Activated T-helper 1 cell treated with anti-CD3 and anti-CD28 coated beads, Interleukin-12 subunit alpha, Interleukin-12 subunit beta, Interleukin-2, Interleukin-4 antibody, amounts not matched to agents 30 ng/mL and 10 ng/mL and 1 ng/mL, durations not matched to agents 14 hours and 24 hours and 36 hours (primary cell): ENCODE measurements at regions of chr1 and their contacts with region 1.

Region 1: DNA sequence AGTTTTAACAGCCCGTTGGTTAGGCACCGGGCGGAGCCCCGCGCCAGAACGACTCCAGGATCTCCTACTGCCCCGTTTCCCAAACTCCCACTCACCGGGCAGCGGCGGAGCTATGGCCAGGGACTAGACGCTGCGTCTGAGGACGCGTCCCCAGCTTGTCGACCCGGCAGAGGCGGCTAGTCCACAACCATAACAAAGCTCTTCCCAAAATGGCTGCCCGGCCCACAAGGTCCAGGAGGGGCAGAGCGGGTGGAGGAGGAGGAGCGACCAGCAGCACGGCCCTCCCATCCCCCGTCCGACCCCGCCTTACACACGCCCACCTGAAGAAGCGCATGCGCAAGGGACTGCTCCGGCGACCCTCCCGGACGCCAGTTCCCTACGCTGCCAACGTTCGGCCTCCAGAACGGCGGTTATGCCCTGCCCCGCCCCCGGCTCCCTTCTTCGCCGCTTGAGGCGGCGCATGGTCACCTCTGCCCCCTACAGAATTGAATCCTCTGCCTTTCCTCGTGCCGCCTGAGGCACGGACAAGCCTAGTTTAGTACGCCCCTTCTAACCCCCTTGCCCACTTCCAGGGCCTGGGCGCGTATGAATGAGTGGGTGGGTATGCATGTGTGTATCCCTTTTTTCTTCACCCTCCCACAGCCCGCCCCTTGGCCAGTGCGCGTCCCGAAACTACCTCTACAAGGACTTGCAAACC is at the start of gene GPBP1L1:
- DNase-seq: peak; percentile 96
- H3K4me3 Mint-ChIP-seq: peak within 1 kb of the TSS; percentile 99
- H3K27ac Mint-ChIP-seq: peak within 1 kb of the TSS; percentile 99
- H3K4me1 Mint-ChIP-seq: peaks cover 31% of the 10 kb centered on the region
- H3K27me3 Mint-ChIP-seq: no peaks in the 10 kb centered on the region
- total RNA-seq, gene GPBP1L1: 99.3 and 109 TPM in 2 replicates

Region 2: GRCh38 chr1:44721485-44722361 is 964.7 kb before region 1 on chr1:
- intact Hi-C with region 1: loop called (anchors 5 kb)
- DNase-seq: peak; percentile 75
- H3K4me3 Mint-ChIP-seq: peak overlapping the region; percentile 77
- H3K27ac Mint-ChIP-seq: peak overlapping the region; percentile 97
- H3K4me1 Mint-ChIP-seq: peaks cover 71% of the 10 kb centered on the region
- H3K27me3 Mint-ChIP-seq: no peaks in the 10 kb centered on the region

Region 3: GRCh38 chr1:44985747-44986359 is 700.6 kb before region 1 on chr1:
- intact Hi-C with region 1: loop called (anchors 10 kb)
- DNase-seq: no peak
- H3K4me3 Mint-ChIP-seq: peak overlapping the region; percentile 100
- H3K27ac Mint-ChIP-seq: peak overlapping the region; percentile 94
- H3K4me1 Mint-ChIP-seq: peaks cover 21% of the 10 kb centered on the region
- H3K27me3 Mint-ChIP-seq: peaks cover 2% of the 10 kb centered on the region

Region 4: DNA sequence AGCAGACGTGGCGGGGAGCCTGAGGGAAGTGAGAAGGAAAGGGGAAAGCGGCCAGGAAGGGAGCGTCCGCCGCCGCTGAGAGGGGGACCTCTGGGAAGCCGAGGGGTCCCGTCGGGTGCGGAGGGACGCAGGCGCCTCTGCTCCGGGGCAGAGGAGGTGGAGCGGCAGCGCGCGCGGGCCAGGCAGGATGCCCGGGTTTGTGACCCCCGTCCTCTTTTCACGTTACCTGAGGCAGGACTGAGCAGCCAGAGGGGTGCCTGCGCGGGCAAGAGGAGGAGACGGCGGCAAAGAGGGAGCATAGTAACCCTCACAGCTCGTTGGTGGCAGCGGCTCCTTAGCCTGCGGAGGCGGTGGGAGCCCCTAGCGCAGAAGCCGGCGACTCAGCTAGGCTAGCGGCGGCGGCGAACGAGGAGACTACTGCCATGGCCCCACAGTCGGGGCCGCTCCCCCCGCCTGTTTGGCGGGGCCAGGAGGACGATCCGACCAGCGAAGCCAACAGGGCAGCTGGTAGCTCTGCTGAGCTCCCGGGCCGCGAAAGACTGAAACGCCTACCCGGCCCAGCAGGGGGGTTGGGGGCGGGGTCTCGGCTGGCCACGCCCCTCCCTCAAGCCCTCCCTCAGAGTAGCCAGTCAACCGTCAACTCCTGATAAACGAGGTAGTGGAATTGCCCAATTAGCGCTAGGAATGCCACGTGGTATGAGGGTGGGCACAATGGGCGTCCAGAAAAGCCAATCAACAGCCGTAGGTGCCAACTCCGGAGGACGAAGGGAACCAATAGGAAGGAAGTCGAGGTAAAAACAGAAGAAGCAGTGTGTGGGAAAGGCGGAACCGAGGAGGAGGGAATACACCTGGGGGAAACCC is 195.6 kb before region 1 on chr1 and contains the start of gene TESK2:
- intact Hi-C with region 1: loop called (anchors 1 kb)
- DNase-seq: peak; percentile 97
- H3K4me3 Mint-ChIP-seq: no peak within 1 kb of the TSS
- H3K27ac Mint-ChIP-seq: no peak within 1 kb of the TSS
- H3K4me1 Mint-ChIP-seq: peaks cover 5% of the 10 kb centered on the region
- H3K27me3 Mint-ChIP-seq: no peaks in the 10 kb centered on the region
- total RNA-seq, gene TESK2: 1.4 and 1.6 TPM in 2 replicates

Region 5: GRCh38 chr1:45640293-45640692 is 46.2 kb before region 1 on chr1:
- intact Hi-C with region 1: no loop called
- DNase-seq: no peak
- H3K4me3 Mint-ChIP-seq: no peak overlapping the region
- H3K27ac Mint-ChIP-seq: no peak overlapping the region
- H3K4me1 Mint-ChIP-seq: no peaks in the 10 kb centered on the region
- H3K27me3 Mint-ChIP-seq: no peaks in the 10 kb centered on the region

Region 6: GRCh38 chr1:45654540-45655280 is 31.8 kb before region 1 on chr1:
- intact Hi-C with region 1: loop called (anchors 2 kb)
- DNase-seq: no peak
- H3K4me3 Mint-ChIP-seq: no peak overlapping the region
- H3K27ac Mint-ChIP-seq: peak overlapping the region; percentile 27
- H3K4me1 Mint-ChIP-seq: peaks cover 5% of the 10 kb centered on the region
- H3K27me3 Mint-ChIP-seq: no peaks in the 10 kb centered on the region

Region 7: GRCh38 chr1:46062651-46063319 is 376.3 kb after region 1 on chr1:
- intact Hi-C with region 1: loop called (anchors 5 kb)
- DNase-seq: peak; percentile 54
- H3K4me3 Mint-ChIP-seq: no peak overlapping the region
- H3K27ac Mint-ChIP-seq: peak overlapping the region; percentile 24
- H3K4me1 Mint-ChIP-seq: peaks cover 34% of the 10 kb centered on the region
- H3K27me3 Mint-ChIP-seq: peaks cover 2% of the 10 kb centered on the region

Region 8: DNA sequence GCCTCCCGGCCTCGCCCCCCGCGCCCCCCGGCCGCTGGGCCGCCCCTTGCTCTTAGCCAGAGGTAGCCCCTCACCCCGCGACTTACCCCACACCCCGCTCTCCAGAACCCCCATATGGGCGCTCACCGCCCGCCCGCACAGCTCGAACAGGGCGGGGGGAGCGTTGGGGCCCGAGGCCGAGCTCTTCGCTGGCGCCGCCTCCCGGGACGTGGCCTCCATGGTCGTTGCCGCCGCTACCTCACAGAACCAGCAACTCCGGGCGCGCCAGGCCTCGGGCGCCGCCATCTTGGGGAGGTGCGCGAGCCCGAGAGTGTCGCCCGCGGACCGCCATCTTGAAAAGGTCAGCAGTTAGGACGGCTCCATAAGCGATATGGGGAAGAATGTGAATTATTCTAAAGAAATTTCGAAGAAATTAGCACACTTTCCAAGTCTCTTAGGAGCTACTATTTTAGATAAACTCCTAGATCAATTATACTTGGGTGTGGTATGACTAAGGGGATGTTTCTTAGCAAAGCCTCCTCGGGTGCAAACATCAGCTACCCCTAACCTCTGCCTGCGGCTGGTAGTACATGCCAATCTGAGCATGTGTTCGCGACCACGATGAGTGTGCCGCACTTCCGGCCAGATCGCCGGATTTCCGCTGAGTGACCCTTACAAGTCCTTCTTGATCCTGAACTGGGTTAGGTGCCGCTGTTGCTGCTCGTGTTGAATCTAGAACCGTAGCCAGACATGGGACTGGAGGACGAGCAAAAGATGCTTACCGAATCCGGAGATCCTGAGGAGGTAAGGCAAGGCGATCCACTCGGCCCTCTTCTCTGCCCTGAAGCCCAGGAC is 616.8 kb after region 1 on chr1 and contains the starts of genes LRRC41 and UQCRH:
- intact Hi-C with region 1: loop called (anchors 1 kb)
- DNase-seq: peak; percentile 92
- H3K4me3 Mint-ChIP-seq: peak within 1 kb of the TSS; percentile 100
- H3K27ac Mint-ChIP-seq: peak within 1 kb of the TSS; percentile 99
- H3K4me1 Mint-ChIP-seq: peaks cover 35% of the 10 kb centered on the region
- H3K27me3 Mint-ChIP-seq: no peaks in the 10 kb centered on the region
- total RNA-seq, gene LRRC41: 62.1 and 62.6 TPM in 2 replicates
- total RNA-seq, gene UQCRH: 258 and 268 TPM in 2 replicates